PC-9 (cell line): ENCODE measurements at regions of chr15 and their contacts with region 1.

Region 1: DNA sequence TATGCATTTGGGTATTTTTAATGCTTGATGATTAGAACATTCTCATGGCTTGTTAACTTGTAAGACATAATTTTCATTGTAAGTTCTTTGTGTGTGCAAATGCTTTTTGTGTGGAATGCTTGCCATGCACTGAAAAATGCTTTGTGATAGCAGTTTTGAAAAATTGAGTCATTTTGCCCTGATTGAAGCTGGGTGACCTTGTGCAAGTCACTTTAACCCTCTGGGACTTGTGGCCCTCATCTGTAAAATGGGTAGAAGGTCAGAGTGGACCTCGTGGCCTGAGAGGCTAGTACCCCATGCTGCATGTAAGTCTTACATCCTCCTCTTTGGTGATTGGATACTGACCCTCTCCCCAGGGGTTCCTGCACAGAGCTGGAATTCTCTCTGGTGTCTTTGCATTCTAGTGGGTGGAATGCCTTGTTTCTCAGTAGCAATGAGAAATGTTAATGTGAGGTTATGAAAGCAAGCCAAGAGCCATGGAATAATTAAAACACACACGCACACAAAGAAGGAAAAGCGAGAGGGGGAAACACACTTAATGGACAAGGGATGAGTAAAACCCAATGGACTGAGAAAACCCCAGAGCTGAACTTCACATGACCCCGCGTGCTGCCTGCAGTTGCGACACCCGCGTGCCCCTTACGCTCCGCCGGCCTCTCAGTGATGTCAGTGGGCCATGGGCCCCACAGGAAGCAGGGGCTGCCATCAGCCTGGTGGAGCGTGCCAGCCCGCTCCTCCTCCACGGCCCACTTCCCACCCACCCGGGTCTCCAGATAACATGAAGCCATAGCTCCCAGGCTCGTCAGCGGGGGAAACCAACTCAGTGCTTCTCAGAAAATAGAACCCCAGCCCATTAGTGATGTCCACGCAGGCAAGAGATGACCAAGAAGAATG is 44.0 kb downstream of the SMAD3 start:
- DNase-seq: peak in 1 of 2 experiments; percentile 36
- H3K4me3 ChIP-seq: no peak overlapping the region
- H3K27ac ChIP-seq: peak overlapping the region; percentile 100
- H3K4me1 ChIP-seq: peaks cover 67% of the 10 kb centered on the region
- H3K27me3 ChIP-seq: no peaks in the 10 kb centered on the region
- CTCF ChIP-seq: no peak

Region 2: GRCh38 chr15:66883322-66883911 is 226.0 kb before region 1 on chr15:
- CTCF ChIA-PET with region 1: no interaction called
- POLR2A ChIA-PET with region 1: interaction called, 17 read pairs
- intact Hi-C with region 1: loop called (anchors 1 kb)
- DNase-seq: peak; percentile 96 to 97
- H3K4me3 ChIP-seq: no peak overlapping the region
- H3K27ac ChIP-seq: peak overlapping the region; percentile 74
- H3K4me1 ChIP-seq: peaks cover 35% of the 10 kb centered on the region
- H3K27me3 ChIP-seq: no peaks in the 10 kb centered on the region
- CTCF ChIP-seq: no peak

Region 3: DNA sequence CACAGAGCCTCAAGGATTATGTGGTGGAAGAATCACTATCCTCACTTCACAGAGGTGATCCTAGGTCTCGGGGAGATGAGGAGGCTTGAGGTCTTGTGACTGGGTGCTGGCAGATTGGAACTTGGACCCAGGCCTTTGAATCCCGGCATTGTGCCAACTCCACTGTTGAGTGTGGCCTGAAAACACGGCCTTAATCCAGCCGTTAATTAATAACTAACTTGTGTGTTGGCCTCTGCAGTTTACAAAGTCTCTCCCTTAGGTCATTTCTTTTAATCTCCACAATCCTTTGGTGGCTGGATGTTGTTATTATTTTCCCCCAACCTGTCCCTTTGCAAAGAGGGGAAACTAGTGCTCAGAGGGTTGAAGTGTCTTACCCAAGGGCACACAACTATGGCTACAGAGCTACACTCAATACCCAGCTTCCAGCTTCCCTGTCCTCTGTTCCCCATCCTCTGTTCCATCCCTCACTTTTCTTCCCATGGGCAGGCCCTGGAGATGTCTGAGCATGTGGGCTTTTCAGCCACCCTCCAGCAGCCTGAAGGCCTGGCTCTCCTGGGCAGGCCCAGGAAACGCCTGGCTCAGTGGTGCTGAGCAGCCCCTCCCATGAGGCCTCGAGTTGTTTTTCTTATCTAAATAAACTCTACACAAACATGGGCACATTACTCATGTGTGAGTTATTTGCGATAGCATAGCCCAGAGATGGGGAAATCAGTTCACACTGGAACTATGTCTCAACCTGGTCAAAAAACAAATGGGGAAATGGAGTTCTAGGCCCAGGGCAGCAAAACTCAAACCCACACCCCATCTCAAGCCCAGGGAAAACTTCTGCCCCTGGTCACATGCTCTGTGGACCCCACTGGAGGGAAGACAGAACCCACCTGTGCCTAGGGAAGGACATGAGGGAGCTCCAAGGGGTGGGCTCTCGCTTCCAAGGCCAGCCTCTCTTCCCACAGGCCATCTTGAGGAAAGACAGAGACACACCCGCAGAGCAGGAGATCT is 60.8 kb before region 1 on chr15:
- CTCF ChIA-PET with region 1: interaction called, 4 read pairs
- POLR2A ChIA-PET with region 1: interaction called, 3 read pairs
- intact Hi-C with region 1: loop called (anchors 1 kb)
- DNase-seq: peak; percentile 73 to 93
- H3K4me3 ChIP-seq: no peak overlapping the region
- H3K27ac ChIP-seq: peak overlapping the region; percentile 98
- H3K4me1 ChIP-seq: peaks cover 44% of the 10 kb centered on the region
- H3K27me3 ChIP-seq: no peaks in the 10 kb centered on the region
- CTCF ChIP-seq: no peak

Region 4: DNA sequence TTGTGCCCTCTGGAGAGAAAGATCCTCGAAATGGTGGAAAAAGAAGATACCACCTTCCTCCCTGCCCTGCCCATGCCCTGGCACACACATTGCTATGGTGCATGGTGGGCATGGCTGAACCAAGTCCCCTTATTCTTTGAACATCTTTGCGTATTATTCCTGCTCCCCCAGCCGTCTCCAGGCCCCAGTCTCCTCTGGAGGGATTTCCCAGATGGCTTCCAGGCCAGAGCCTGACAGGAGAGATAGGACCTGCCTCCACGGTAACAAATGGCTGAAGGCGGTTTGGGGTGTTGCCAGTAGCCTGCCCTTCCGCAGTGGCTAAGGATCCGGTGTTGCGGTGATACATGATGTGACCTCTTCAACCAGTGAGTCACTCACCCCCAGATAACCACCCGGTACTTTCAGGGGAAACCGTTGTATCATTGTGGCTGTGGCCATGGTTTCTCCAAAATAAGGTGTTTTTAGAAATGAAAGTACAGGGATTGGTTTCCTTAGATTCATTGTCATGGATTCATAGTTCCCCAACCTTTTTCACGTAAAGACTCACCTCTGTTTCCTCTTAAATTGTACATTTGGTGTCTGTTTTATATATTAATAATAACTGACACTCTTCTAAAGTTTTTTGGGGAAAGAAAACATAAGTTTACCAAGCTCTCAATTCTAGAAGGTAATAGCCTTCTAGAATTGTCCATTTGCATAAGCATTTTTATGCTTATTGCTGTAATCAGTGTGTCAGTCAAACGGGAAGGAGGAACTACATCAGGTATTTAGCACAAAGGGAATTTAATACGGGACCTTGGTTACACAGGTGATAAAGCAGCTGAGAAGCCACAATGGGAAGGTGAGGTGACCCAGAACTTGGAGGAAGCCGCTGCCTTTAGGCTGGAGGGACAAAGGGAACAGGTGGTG is 18.1 kb before region 1 on chr15:
- CTCF ChIA-PET with region 1: interaction called, 3 read pairs
- POLR2A ChIA-PET with region 1: no interaction called
- intact Hi-C with region 1: loop called (anchors 1 kb)
- DNase-seq: peak; percentile 95
- H3K4me3 ChIP-seq: peak overlapping the region; percentile 39; the same call in 1 of the 2 replicates
- H3K27ac ChIP-seq: peak overlapping the region; percentile 96
- H3K4me1 ChIP-seq: peaks cover 74% of the 10 kb centered on the region
- H3K27me3 ChIP-seq: no peaks in the 10 kb centered on the region
- CTCF ChIP-seq: no peak

Region 5: DNA sequence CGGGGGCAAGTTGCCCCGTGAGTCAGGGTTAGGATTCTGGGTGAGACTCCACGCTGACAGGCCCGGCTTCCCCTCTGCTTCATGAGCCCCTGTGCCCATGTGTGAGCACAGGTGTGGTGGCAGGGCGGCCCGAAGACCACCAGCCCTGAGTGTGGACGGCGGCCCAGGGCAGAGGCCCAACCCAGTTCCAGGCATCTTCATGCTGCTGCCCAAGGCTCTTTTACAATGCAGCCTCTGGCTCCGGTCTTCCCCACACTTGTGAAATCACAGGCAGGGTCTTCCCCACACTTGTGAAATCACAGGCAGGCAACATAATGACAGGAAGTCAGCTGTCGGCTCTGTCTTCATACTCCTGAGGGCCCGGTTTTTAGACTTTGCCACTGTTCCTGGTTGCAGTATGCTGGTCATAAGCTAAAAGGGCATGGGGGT is 66.3 kb after region 1 on chr15:
- CTCF ChIA-PET with region 1: no interaction called
- POLR2A ChIA-PET with region 1: interaction called, 34 read pairs
- intact Hi-C with region 1: loop called (anchors 1 kb)
- DNase-seq: no peak
- H3K4me3 ChIP-seq: no peak overlapping the region
- H3K27ac ChIP-seq: peak overlapping the region; percentile 85
- H3K4me1 ChIP-seq: peaks cover 60% of the 10 kb centered on the region
- H3K27me3 ChIP-seq: no peaks in the 10 kb centered on the region
- CTCF ChIP-seq: no peak

Region 6: DNA sequence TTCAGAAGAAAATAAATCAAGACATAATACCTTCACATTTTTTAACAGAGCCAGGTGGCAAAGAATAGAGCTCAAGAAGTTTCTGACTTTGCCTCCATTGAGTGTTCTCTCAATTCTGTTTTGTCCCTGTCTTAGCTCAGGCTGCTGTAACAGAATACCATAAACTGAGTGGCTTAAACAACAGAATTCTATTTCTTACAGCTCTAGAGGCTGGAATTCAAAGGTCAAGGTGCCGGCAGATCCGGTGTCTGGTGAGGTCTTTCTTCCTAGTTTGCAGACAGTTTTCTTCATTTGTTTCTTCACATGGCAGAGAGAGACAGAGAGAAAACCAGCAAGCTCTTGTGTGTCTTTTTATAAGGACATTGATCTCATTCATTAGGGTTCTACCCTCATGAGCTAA is 170.8 kb after region 1 on chr15:
- CTCF ChIA-PET with region 1: no interaction called
- POLR2A ChIA-PET with region 1: interaction called, 15 read pairs
- intact Hi-C with region 1: no loop called
- DNase-seq: no peak
- H3K4me3 ChIP-seq: no peak overlapping the region
- H3K27ac ChIP-seq: no peak overlapping the region
- H3K4me1 ChIP-seq: no peaks in the 10 kb centered on the region
- H3K27me3 ChIP-seq: no peaks in the 10 kb centered on the region
- CTCF ChIP-seq: no peak